Cardiac septum (tissue), 1 donor: ENCODE measurements at regions of chr14 and their contacts with region 1.

Region 1: DNA sequence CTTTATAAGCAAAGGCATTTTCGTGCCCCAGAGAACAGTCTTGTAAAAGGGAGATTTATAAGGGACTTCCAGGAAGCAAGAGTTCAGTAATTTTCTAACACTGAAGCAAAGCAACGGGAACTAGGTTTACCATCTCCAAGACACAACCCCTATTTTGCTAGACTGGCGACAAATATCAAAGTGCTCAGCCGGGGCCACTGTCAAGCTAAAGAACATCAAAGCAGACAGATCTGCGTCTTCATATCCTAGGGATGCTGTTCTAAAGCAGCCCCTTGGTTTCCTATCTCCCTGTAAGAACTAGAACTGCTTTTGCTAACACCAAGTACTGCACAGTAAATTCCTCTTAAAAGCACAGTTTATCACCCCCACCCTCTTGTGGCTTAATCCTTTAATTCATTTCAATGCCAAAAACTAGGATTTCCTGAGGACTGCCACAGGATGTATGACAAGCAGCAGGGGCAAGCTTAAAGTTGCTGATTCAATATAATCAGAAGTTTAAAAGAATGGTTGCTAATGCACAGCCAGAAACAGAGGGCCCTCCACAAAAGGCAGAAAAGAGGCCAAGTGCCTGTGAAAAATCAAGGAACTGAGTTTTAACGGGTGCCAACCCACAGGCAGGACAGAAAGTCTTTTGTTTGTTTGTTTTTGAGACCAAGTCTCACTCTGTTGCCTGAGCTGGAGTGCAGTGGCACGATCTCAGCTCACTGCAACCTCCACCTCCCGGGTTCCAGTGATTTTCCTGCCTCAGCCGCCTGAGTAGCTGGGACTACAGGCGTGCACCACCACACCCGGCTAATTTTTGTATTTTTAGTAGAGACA is 44.0 kb upstream of the ISM2 start:
- DNase-seq: no peak

Region 2: GRCh38 chr14:76876076-76876475 is 666.6 kb before region 1 on chr14:
- intact Hi-C with region 1: no loop called
- DNase-seq: no peak

Region 3: GRCh38 chr14:76937181-76938091 is 605.2 kb before region 1 on chr14:
- intact Hi-C with region 1: no loop called
- DNase-seq: no peak

Region 4: GRCh38 chr14:77301103-77301502 is 241.5 kb before region 1 on chr14:
- intact Hi-C with region 1: loop called (anchors 10 kb)
- DNase-seq: no peak

Region 5: DNA sequence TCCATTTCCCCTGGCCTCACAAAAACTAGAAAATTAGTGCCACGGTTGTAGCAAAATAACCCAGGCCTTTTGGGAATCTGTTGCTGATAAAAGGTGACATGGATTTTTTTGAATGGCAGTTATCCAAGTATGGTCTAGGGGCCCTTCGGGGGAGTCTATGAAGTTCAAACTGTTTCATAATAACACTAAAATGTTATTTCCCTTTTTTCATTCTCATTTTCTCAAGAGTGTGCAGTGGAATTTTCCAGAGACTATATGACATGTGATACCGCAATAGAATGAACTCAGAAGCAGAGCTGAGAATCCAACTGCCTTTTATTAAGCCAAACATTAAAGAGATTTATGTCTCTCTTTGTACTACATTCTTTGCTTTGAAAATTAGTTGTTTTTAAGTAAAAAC is 194.9 kb before region 1 on chr14:
- intact Hi-C with region 1: no loop called
- DNase-seq: no peak